Activated naive CD4-positive, alpha-beta T cell treated with anti-CD3 and anti-CD28 coated beads for 36 hours (primary cell): ENCODE measurements at regions of chr5 and their contacts with region 1.

Region 1: DNA sequence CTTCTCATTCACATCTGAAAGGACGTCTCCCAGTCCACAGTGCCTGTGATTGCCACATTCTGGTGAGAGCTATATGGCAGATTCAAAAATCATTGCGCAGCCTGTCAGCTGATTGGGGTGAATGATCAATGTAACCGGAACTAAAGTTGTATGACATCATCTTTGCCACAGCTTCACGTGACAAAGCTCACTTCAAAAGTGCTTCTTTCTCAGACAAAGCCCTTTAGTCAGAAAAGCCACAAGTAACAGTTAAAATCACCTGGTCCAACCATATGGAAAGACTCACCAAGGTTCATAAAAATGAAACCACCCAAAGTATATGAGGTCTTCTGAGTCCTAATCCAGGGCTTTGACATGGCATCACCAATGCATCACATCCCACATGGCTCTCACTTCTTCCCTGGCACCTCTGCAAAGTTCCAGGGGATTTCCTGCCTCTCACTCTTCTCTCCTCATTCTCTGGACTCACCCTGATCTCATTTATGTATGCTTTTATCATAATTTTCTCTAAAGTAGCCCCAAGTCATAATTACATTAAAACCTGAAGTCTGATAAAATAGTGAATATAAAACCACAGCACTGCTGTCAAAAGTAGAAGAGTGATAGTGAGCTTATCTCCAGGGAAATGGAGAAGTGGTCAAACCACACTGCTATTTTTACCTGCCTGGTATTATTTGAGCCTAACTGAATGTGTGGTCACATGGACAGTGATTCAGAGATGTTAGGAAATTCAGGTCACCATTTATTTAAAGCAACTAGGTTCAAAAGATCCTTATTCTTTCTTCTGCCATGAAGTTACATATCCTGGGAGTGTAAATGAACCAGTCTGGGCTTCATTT is 193.1 kb upstream of the PTGER4 start:
- DNase-seq: peak; percentile 85
- H3K4me3 Mint-ChIP-seq: peak overlapping the region; percentile 1
- H3K27ac Mint-ChIP-seq: peak overlapping the region; percentile 92
- H3K4me1 Mint-ChIP-seq: peaks cover 83% of the 10 kb centered on the region
- H3K27me3 Mint-ChIP-seq: no peaks in the 10 kb centered on the region

Region 2: DNA sequence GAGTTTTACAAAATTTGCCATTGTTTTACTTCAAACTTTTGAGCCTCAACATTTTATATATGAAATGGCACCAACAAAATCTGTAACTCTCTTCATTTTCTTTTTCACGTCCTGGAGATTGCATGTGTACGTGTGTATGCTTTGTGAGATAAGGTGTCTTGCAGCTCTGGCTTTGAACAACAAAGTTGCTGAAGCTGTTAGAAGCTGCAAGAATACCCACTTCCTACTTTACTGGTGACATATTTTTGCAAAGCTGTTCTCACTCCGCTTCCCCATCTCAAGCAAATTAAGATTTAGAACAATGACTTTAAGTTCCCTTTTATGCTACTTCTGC is 1309.1 kb before region 1 on chr5:
- CTCF ChIA-PET with region 1: no interaction called
- intact Hi-C with region 1: loop called (anchors 10 kb)
- DNase-seq: no peak
- H3K4me3 Mint-ChIP-seq: peak overlapping the region; percentile 75
- H3K27ac Mint-ChIP-seq: peak overlapping the region; percentile 92
- H3K4me1 Mint-ChIP-seq: peaks cover 95% of the 10 kb centered on the region
- H3K27me3 Mint-ChIP-seq: no peaks in the 10 kb centered on the region

Region 3: DNA sequence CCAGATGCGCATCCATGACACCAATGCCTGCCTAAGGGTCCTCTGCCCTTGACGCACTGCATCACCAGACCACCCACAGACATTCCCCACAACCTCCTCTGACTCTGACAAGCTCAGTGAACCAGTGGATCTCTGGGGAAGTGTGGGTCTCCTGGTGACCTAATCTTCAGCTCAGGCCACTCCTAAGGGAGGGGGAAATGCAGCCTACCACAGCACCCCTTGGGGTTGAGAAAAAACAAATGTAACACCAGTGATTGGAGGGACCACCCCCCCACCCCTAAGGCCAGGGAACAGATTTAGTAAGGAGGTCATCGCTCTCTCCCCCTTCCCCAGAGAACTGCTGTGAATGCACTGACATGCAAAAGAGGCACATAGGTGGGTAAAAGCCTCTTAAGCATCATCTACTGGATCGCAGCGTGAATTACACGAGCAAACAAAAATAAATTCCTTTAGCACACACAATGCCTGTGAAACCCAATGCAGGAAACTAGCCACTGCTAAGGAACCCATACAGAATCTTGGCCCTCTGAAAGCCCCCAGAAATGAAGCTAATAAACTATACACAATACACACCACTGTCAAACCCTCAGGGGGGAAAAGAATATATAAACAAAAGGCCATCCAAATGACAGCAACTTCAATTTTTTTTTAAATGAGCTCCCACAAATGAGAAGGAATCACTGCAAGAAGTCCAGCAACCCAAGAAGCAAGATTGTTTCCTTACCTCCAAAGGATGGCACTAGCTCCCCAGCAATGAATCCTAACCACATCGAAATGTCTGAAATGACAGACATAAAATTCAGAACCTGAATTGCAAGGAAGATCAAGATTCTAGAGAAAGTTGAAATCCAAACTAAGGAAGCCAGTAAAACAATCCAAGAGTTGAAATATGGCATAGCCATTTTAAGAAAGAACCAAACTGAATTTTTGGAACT is 320.6 kb before region 1 on chr5:
- CTCF ChIA-PET with region 1: interaction called, 3 read pairs
- intact Hi-C with region 1: loop called (anchors 5 kb)
- DNase-seq: peak; percentile 61
- H3K4me3 Mint-ChIP-seq: no peak overlapping the region
- H3K27ac Mint-ChIP-seq: peak overlapping the region; percentile 14
- H3K4me1 Mint-ChIP-seq: peaks cover 9% of the 10 kb centered on the region
- H3K27me3 Mint-ChIP-seq: no peaks in the 10 kb centered on the region

Region 4: GRCh38 chr5:40333459-40334244 is 153.0 kb before region 1 on chr5:
- CTCF ChIA-PET with region 1: no interaction called
- intact Hi-C with region 1: loop called (anchors 1 kb)
- DNase-seq: peak; percentile 63
- H3K4me3 Mint-ChIP-seq: no peak overlapping the region
- H3K27ac Mint-ChIP-seq: peak overlapping the region; percentile 41
- H3K4me1 Mint-ChIP-seq: peaks cover 15% of the 10 kb centered on the region
- H3K27me3 Mint-ChIP-seq: peaks cover 3% of the 10 kb centered on the region

Region 5: GRCh38 chr5:40437452-40437861 is 49.2 kb before region 1 on chr5:
- CTCF ChIA-PET with region 1: interaction called, 5 read pairs
- intact Hi-C with region 1: loop called (anchors 1 kb)
- DNase-seq: peak; percentile 19
- H3K4me3 Mint-ChIP-seq: no peak overlapping the region
- H3K27ac Mint-ChIP-seq: peak overlapping the region; percentile 94
- H3K4me1 Mint-ChIP-seq: peaks cover 81% of the 10 kb centered on the region
- H3K27me3 Mint-ChIP-seq: no peaks in the 10 kb centered on the region

Region 6: GRCh38 chr5:40736103-40736875 is 249.6 kb after region 1 on chr5:
- CTCF ChIA-PET with region 1: no interaction called
- intact Hi-C with region 1: loop called (anchors 2 kb)
- DNase-seq: no peak
- H3K4me3 Mint-ChIP-seq: no peak overlapping the region
- H3K27ac Mint-ChIP-seq: no peak overlapping the region
- H3K4me1 Mint-ChIP-seq: peaks cover 26% of the 10 kb centered on the region
- H3K27me3 Mint-ChIP-seq: no peaks in the 10 kb centered on the region